CD4-positive, alpha-beta memory T cell (primary cell): ENCODE measurements at regions of chr12 and their contacts with region 1.

Region 1: DNA sequence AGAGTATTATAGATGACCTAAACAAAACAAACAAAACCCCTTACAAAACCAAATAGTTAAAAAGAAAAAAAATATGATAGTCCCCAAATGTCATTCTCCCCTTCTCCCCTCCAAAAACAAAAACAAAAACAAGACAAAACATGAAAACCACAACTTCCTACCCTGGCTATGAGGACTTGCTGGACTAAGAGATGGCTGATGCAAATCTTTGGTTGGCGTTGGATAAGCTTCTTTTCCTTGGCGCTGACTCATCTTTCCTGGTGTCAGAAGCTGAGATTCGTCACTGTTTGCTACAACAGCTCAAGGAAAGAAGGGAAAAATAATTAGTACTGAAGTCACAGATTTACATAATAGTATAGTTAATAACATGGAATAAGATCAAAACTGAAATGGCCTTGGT is 102.5 kb upstream of the BBS10 start:
- DNase-seq: no peak
- H3K4me3 ChIP-seq: no peak overlapping the region
- H3K4me3 Mint-ChIP-seq: no peak overlapping the region
- H3K27ac ChIP-seq: no peak overlapping the region
- H3K27ac Mint-ChIP-seq: peak overlapping the region in 2 of 7 donors; percentile 26 to 47
- H3K4me1 ChIP-seq: peaks cover 10% of the 10 kb centered on the region
- H3K4me1 Mint-ChIP-seq: peaks cover 20 to 42% (median 26%) of the 10 kb centered on the region in 4 donors
- H3K27me3 ChIP-seq: no peaks in the 10 kb centered on the region
- H3K27me3 Mint-ChIP-seq: no peaks in the 10 kb centered on the region

Region 2: GRCh38 chr12:76417116-76417515 is 33.6 kb before region 1 on chr12:
- CTCF ChIA-PET with region 1: interaction called, 6 read pairs
- POLR2A ChIA-PET with region 1: no interaction called
- intact Hi-C with region 1: loop called (anchors 5 kb)
- DNase-seq: no peak
- H3K4me3 ChIP-seq: no peak overlapping the region
- H3K4me3 Mint-ChIP-seq: no peak overlapping the region
- H3K27ac ChIP-seq: no peak overlapping the region
- H3K27ac Mint-ChIP-seq: peak overlapping the region in 4 of 7 donors; percentile 26 to 49 (median 46)
- H3K4me1 ChIP-seq: peaks cover 14% of the 10 kb centered on the region
- H3K4me1 Mint-ChIP-seq: peaks cover 15 to 23% (median 20%) of the 10 kb centered on the region in 4 donors
- H3K27me3 ChIP-seq: no peaks in the 10 kb centered on the region
- H3K27me3 Mint-ChIP-seq: no peaks in the 10 kb centered on the region

Region 3: DNA sequence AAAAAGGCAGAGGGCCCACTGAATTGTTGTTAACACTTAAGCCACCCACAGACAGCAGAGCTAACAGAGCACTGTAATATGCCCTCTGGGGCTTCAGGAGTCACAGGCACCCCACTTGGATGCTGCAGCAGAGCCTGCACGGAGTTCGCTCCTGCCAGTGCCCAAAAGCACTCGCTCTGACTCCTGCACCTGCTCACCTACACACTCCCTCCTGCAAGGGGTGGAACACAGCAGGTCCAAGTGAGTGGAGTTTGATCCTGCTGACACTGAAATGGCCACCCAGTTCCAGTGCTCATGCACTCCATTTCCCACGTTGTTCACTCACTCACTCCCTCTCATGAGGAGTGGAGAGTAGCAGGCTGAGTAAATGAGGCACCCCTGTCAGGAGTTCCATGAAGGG is 40.1 kb after region 1 on chr12:
- CTCF ChIA-PET with region 1: no interaction called
- POLR2A ChIA-PET with region 1: no interaction called
- intact Hi-C with region 1: no loop called
- DNase-seq: no peak
- H3K4me3 ChIP-seq: no peak overlapping the region
- H3K4me3 Mint-ChIP-seq: peak overlapping the region in 1 of 8 donors; percentile 17
- H3K27ac ChIP-seq: no peak overlapping the region
- H3K27ac Mint-ChIP-seq: peak overlapping the region in 2 of 7 donors; percentile 10 to 56
- H3K4me1 ChIP-seq: peaks cover 12% of the 10 kb centered on the region
- H3K4me1 Mint-ChIP-seq: peaks cover 28 to 48% (median 39%) of the 10 kb centered on the region in 4 donors
- H3K27me3 ChIP-seq: no peaks in the 10 kb centered on the region
- H3K27me3 Mint-ChIP-seq: no peaks in the 10 kb centered on the region

Region 4: GRCh38 chr12:76595056-76595455 is 144.4 kb after region 1 on chr12:
- CTCF ChIA-PET with region 1: no interaction called
- POLR2A ChIA-PET with region 1: no interaction called
- intact Hi-C with region 1: no loop called
- DNase-seq: no peak
- H3K4me3 ChIP-seq: no peak overlapping the region
- H3K4me3 Mint-ChIP-seq: no peak overlapping the region
- H3K27ac ChIP-seq: no peak overlapping the region
- H3K27ac Mint-ChIP-seq: no peak overlapping the region
- H3K4me1 ChIP-seq: no peaks in the 10 kb centered on the region
- H3K4me1 Mint-ChIP-seq: no peaks in the 10 kb centered on the region
- H3K27me3 ChIP-seq: no peaks in the 10 kb centered on the region
- H3K27me3 Mint-ChIP-seq: peaks cover 0 to 2% of the 10 kb centered on the region in 2 donors